Activated CD4-positive, alpha-beta T cell treated with anti-CD3 and anti-CD28 coated beads, Interleukin-2, amount 10 ng/mL, durations not matched to agents 7 days and 5 days (primary cell): ENCODE measurements at regions of chr17 and their contacts with region 1.

Region 1: GRCh38 chr17:1331708-1332107 is 52.2 kb downstream of the TRARG1 start:
- DNase-seq: peak; percentile 65
- H3K4me3 Mint-ChIP-seq: no peak overlapping the region
- H3K27ac Mint-ChIP-seq: peak overlapping the region; percentile 85
- H3K4me1 Mint-ChIP-seq: peaks cover 12% of the 10 kb centered on the region
- H3K27me3 Mint-ChIP-seq: no peaks in the 10 kb centered on the region

Region 2: GRCh38 chr17:1275962-1276736 is 55.6 kb before region 1 on chr17:
- CTCF ChIA-PET with region 1: interaction called, 19 read pairs
- POLR2A ChIA-PET with region 1: interaction called, 8 read pairs
- DNase-seq: peak; percentile 78
- H3K4me3 Mint-ChIP-seq: no peak overlapping the region
- H3K27ac Mint-ChIP-seq: no peak overlapping the region
- H3K4me1 Mint-ChIP-seq: peaks cover 6% of the 10 kb centered on the region
- H3K27me3 Mint-ChIP-seq: peaks cover 41% of the 10 kb centered on the region

Region 3: DNA sequence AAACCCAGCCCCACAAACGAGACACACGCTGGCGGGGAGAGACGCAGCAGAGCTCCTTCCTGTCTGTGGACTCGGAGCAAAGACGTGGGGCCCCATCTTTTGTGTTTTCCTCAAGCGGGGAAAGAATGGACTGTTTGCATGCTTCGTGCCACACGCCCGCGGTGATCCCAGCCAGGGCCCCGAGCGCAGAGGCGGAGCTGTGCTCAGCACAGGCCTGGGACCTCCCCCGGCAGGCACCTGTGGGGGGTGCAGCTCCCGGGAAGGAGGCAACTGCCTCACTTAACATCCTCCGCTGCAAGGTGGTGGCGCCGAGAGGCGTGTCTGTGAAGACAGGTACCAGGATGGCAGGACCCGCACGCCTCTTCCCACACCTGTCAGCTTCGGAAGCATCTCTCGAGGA is 33.1 kb before region 1 on chr17:
- CTCF ChIA-PET with region 1: interaction called, 17 read pairs
- POLR2A ChIA-PET with region 1: no interaction called
- DNase-seq: peak; percentile 26
- H3K4me3 Mint-ChIP-seq: no peak overlapping the region
- H3K27ac Mint-ChIP-seq: no peak overlapping the region
- H3K4me1 Mint-ChIP-seq: peaks cover 51% of the 10 kb centered on the region
- H3K27me3 Mint-ChIP-seq: peaks cover 7% of the 10 kb centered on the region

Region 4: DNA sequence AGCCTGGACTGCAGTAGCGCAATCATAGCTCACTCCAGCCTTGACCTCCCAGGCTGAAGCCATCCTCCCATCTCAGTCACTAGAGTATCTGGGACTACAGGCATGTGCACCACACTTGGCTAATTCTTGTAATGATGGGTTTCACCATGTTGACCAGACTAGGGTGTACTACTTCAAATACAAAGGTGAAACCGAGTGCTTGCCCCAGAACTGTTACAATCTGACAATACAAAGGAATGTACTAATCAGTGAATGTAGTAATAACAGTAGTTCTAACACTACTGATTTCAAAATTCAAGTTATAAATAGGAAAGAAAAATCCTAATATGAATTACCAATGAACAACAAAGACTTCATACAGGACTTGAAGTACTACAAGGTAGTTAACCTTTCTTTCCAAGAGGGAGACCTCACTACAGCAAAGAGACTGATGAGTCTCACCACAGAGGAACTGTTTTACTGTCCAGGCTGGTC is 100.0 kb after region 1 on chr17:
- CTCF ChIA-PET with region 1: no interaction called
- POLR2A ChIA-PET with region 1: no interaction called
- DNase-seq: no peak
- H3K4me3 Mint-ChIP-seq: no peak overlapping the region
- H3K27ac Mint-ChIP-seq: no peak overlapping the region
- H3K4me1 Mint-ChIP-seq: peaks cover 9% of the 10 kb centered on the region
- H3K27me3 Mint-ChIP-seq: no peaks in the 10 kb centered on the region

Region 5: GRCh38 chr17:1529863-1530262 is 198.2 kb after region 1 on chr17:
- CTCF ChIA-PET with region 1: no interaction called
- POLR2A ChIA-PET with region 1: no interaction called
- DNase-seq: no peak
- H3K4me3 Mint-ChIP-seq: no peak overlapping the region
- H3K27ac Mint-ChIP-seq: no peak overlapping the region
- H3K4me1 Mint-ChIP-seq: peaks cover 18% of the 10 kb centered on the region
- H3K27me3 Mint-ChIP-seq: no peaks in the 10 kb centered on the region

Region 6: GRCh38 chr17:2564878-2565277 is 1233.2 kb after region 1 on chr17:
- CTCF ChIA-PET with region 1: no interaction called
- POLR2A ChIA-PET with region 1: no interaction called
- DNase-seq: no peak
- H3K4me3 Mint-ChIP-seq: no peak overlapping the region
- H3K27ac Mint-ChIP-seq: no peak overlapping the region
- H3K4me1 Mint-ChIP-seq: peaks cover 4% of the 10 kb centered on the region
- H3K27me3 Mint-ChIP-seq: peaks cover 3% of the 10 kb centered on the region